Activated naive CD4-positive, alpha-beta T cell treated with anti-CD3 and anti-CD28 coated beads for 36 hours (primary cell): ENCODE measurements at regions of chr3 and their contacts with region 1.

Region 1: GRCh38 chr3:121660356-121661171 is at the start of gene HCLS1:
- DNase-seq: peak; percentile 82
- H3K4me3 Mint-ChIP-seq: peak within 1 kb of the TSS; percentile 99
- H3K27ac Mint-ChIP-seq: peak within 1 kb of the TSS; percentile 100
- H3K4me1 Mint-ChIP-seq: peaks cover 53% of the 10 kb centered on the region
- H3K27me3 Mint-ChIP-seq: no peaks in the 10 kb centered on the region
- total RNA-seq, gene HCLS1: 240 to 248 TPM

Region 2: DNA sequence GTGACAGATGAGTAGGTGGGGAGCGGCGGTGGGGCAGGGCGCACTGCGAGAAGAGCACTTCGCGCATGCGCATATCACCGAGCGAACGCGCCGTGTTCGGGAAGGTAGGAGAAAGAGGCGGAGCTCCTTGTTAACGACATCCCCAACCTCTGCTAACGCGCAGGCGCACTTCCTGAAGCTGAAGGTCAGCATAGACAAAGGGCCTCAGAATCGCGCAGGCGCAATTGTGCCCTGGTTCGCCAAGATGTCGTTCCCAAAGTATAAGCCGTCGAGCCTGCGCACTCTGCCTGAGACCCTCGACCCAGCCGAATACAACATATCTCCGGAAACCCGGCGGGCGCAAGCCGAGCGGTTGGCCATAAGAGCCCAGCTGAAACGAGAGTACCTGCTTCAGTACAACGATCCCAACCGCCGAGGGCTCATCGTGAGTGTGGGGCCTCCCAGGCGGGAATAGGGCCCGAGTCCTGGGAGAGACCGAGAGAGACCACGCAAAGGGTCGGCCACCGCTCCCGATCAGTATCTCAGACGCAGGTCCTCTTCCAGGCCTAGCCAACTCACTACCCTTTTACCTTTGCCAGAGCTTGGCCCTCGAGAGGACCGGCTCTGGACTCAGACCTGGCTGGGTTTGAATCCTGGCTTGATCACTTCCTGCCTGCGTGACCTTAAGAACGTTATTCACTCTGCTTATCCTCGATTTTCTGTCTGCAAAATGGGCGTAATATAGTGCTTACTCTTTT is 1064.3 kb before region 1 on chr3 and contains the start of gene NDUFB4:
- CTCF ChIA-PET with region 1: no interaction called
- intact Hi-C with region 1: loop called (anchors 2 kb)
- DNase-seq: peak; percentile 97
- H3K4me3 Mint-ChIP-seq: peak within 1 kb of the TSS; percentile 86
- H3K27ac Mint-ChIP-seq: peak within 1 kb of the TSS; percentile 95
- H3K4me1 Mint-ChIP-seq: peaks cover 7% of the 10 kb centered on the region
- H3K27me3 Mint-ChIP-seq: no peaks in the 10 kb centered on the region
- total RNA-seq, gene NDUFB4: 146 to 152 TPM

Region 3: DNA sequence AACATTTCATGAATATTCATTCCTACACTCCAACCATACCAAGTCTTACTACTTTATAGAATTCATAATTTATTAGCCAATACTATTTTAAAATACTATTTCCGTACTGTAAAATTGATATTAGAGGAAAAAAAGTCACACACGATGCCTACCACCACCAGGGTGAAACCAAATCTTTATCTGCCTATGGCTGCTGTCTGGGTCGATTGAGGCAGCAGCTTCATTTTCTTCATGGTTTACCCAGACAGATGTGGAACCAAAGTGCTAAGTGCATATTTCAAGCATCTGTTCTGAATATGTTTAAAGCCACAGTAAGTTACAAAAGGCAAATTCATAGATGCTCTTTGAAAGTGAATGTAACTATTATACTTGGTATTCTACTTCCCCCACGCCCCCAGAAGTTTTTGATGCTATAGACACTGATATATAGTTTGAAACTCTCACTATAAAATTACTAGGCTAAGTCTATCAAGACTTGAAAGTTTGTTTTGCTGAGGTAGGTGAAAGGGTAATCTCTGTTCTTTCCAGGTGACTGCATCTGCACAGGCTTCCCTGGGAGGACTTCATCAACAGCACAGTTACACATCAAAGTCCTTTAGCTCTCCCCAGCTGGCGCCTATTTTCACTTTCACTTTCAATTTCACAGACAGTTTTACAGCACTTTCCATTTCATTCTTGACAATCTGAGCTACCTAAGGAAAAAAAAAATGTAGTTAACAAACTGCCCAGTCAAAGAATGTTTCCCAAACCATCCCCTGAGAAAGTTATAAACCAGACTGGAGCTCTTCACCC is 228.6 kb before region 1 on chr3:
- CTCF ChIA-PET with region 1: no interaction called
- intact Hi-C with region 1: loop called (anchors 1 kb)
- DNase-seq: peak; percentile 64
- H3K4me3 Mint-ChIP-seq: no peak overlapping the region
- H3K27ac Mint-ChIP-seq: no peak overlapping the region
- H3K4me1 Mint-ChIP-seq: peaks cover 18% of the 10 kb centered on the region
- H3K27me3 Mint-ChIP-seq: no peaks in the 10 kb centered on the region

Region 4: DNA sequence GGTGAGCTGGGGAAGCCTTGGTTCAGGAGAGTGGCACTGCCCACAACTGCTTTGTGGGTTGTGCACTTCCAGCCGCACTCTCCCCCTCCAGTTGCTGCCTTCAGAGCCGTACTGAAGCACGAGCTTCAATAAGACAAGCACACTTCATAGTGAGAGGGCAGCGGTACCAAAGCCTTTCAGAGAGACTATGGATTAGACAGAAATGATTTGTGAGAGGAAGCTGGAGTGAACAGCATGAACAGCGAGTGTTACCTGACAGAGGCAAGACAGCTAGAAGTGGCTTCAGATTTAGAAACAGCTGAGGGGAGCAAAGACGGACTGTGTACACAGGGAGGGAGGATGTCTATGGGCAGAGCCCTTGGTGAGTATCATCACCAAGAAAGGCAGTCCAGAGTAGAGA is 31.0 kb before region 1 on chr3:
- CTCF ChIA-PET with region 1: no interaction called
- intact Hi-C with region 1: no loop called
- DNase-seq: no peak
- H3K4me3 Mint-ChIP-seq: no peak overlapping the region
- H3K27ac Mint-ChIP-seq: no peak overlapping the region
- H3K4me1 Mint-ChIP-seq: no peaks in the 10 kb centered on the region
- H3K27me3 Mint-ChIP-seq: no peaks in the 10 kb centered on the region

Region 5: GRCh38 chr3:121649645-121650044 is 10.9 kb before region 1 on chr3:
- CTCF ChIA-PET with region 1: interaction called, 4 read pairs
- intact Hi-C with region 1: loop called (anchors 1 kb)
- DNase-seq: no peak
- H3K4me3 Mint-ChIP-seq: no peak overlapping the region
- H3K27ac Mint-ChIP-seq: peak overlapping the region; percentile 46
- H3K4me1 Mint-ChIP-seq: peaks cover 45% of the 10 kb centered on the region
- H3K27me3 Mint-ChIP-seq: no peaks in the 10 kb centered on the region

Region 6: DNA sequence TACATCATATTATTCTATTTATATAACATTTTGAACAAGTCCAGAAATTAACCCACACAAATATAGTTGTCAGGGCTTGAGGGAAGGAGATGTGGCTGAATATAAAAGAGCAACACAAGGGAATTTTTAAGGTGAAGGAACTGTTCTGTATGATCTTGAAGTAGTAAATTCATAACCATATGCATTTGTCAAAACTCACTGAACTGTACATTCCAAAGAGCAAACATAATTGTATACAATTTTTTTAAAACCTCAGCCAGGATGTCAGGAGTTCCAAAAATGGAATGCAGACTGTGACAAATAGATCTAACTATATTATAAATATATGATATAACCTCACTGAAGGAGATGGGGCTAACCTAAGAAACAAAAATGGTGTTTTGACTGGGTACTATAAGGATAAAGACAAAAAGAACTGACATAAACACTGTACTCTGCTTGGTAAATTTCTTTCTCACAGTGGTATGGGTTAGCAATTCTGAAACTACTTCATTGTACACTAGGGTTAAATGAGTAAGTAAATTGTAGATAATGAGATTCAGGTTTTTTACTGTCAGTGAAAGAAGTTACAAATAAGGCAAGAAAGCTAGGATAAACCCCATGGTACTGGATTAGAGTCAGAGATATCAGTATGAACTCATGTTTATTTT is 74.6 kb after region 1 on chr3:
- CTCF ChIA-PET with region 1: no interaction called
- intact Hi-C with region 1: loop called (anchors 1 kb)
- DNase-seq: no peak
- H3K4me3 Mint-ChIP-seq: no peak overlapping the region
- H3K27ac Mint-ChIP-seq: peak overlapping the region; percentile 0
- H3K4me1 Mint-ChIP-seq: peaks cover 38% of the 10 kb centered on the region
- H3K27me3 Mint-ChIP-seq: no peaks in the 10 kb centered on the region

Region 7: GRCh38 chr3:122146466-122146865 is 485.9 kb after region 1 on chr3:
- CTCF ChIA-PET with region 1: no interaction called
- intact Hi-C with region 1: loop called (anchors 2 kb)
- DNase-seq: peak; percentile 86
- H3K4me3 Mint-ChIP-seq: no peak overlapping the region
- H3K27ac Mint-ChIP-seq: peak overlapping the region; percentile 46
- H3K4me1 Mint-ChIP-seq: peaks cover 28% of the 10 kb centered on the region
- H3K27me3 Mint-ChIP-seq: peaks cover 1% of the 10 kb centered on the region

Region 8: DNA sequence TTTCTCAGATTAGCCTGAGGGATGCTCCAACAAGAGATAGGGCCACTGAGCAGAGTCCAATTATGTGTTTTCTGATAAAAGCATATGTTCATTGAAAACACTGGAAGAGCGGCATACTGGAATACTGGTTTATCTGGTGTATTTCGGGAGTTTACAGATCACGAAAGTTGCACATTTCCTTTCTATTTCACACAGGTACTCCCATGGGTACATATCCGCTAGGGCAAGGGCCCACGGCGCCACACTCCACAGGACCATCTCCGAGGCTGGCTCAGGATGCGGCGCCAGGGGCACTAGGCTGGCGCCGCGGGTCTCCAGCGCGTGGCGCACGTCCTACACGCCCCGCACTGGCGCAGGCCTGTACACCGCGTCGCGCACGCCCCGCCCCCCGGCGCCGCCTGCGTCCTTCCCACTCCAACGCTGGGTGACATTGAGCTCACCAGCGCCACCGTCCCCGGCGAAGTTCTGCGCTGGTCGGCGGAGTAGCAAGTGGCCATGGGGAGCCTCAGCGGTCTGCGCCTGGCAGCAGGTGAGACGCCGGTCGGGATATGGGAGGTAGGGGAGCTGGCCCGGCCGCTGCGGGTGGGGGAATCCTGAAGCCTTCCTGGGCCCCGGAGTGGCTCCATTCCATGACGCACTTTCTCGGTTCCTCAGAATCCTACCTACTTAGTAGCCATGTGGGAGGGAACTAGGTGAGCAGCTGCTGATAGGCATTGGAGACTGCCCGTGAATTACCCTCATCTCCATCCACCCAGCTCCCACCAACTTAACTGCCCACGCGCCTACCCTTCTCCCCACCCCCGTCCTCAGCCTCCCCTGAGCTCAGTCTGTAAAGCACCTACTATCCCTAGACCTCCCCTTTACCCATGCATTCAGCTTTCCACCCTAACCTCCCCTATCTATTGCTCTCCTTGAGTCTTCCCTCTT is 723.5 kb after region 1 on chr3 and contains the start of gene FAM162A:
- CTCF ChIA-PET with region 1: no interaction called
- intact Hi-C with region 1: loop called (anchors 2 kb)
- DNase-seq: peak; percentile 93
- H3K4me3 Mint-ChIP-seq: peak within 1 kb of the TSS; percentile 90
- H3K27ac Mint-ChIP-seq: peak within 1 kb of the TSS; percentile 93
- H3K4me1 Mint-ChIP-seq: peaks cover 62% of the 10 kb centered on the region
- H3K27me3 Mint-ChIP-seq: no peaks in the 10 kb centered on the region
- total RNA-seq, gene FAM162A: 111 to 112 TPM